ENCODE measurements at regions of chr17 and their contacts with region 1.

Region 1: DNA sequence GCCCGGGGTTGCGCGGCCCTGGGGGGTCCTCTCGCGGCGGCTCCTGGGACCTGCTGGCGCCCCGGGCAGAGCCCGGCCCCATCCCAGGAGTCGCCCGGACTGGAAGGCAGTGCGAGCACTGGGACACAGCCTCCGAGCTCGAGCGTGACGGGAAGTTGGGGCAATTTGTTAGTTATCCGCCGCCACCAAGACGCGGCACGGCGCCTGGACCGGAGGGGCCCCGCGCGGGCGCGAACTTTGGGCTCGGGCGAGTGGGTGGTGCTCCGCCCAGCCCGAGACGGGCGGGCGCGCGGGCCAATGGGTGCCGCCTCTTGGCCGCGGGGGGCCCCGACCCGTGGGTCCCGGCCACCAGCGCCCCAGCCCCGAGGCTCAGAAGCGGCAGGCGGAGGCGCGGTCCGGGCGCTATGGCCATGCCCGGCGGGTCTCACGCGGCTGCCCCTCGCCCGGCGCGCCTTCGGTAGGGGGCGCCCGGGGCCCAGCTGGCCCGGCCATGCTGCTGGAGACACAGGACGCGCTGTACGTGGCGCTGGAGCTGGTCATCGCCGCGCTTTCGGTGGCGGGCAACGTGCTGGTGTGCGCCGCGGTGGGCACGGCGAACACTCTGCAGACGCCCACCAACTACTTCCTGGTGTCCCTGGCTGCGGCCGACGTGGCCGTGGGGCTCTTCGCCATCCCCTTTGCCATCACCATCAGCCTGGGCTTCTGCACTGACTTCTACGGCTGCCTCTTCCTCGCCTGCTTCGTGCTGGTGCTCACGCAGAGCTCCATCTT is at the start of gene ADORA2B:
- DNase-seq: no peak
- ATAC-seq: peak; percentile 81
- H3K4me3 ChIP-seq: peak within 1 kb of the TSS; percentile 56 to 86
- H3K27ac ChIP-seq: peak within 1 kb of the TSS; percentile 92
- H3K4me1 ChIP-seq: peaks cover 17 to 55% of the 10 kb centered on the region in 2 experiments
- H3K27me3 ChIP-seq: no peaks in the 10 kb centered on the region
- CTCF ChIP-seq: peak; percentile 25 to 43 (median 43); a peak in 5 of 6 replicates
- POLR2A ChIP-seq: peak; percentile 20
- RAD21 ChIP-seq: peak; percentile 77
- total RNA-seq, gene ADORA2B: 47.5 TPM

Region 2: GRCh38 chr17:15257258-15257788 is 687.6 kb before region 1 on chr17:
- CTCF ChIA-PET with region 1: no interaction called
- POLR2A ChIA-PET with region 1: no interaction called
- RAD21 ChIA-PET with region 1: no interaction called
- intact Hi-C with region 1: loop called (anchors 5 kb)
- DNase-seq: peak; percentile 59
- ATAC-seq: peak; percentile 68
- H3K4me3 ChIP-seq: no peak overlapping the region
- H3K27ac ChIP-seq: 0 out of 2 replicates have a peak overlapping the region, but pooled peaks have one; percentile 8
- H3K4me1 ChIP-seq: peaks cover 13 to 34% of the 10 kb centered on the region in 2 experiments; a peak in 3 of 4 replicates
- H3K27me3 ChIP-seq: no peaks in the 10 kb centered on the region
- CTCF ChIP-seq: peak; percentile 81 to 92 (median 91)
- POLR2A ChIP-seq: no peak
- RAD21 ChIP-seq: peak; percentile 56

Region 3: DNA sequence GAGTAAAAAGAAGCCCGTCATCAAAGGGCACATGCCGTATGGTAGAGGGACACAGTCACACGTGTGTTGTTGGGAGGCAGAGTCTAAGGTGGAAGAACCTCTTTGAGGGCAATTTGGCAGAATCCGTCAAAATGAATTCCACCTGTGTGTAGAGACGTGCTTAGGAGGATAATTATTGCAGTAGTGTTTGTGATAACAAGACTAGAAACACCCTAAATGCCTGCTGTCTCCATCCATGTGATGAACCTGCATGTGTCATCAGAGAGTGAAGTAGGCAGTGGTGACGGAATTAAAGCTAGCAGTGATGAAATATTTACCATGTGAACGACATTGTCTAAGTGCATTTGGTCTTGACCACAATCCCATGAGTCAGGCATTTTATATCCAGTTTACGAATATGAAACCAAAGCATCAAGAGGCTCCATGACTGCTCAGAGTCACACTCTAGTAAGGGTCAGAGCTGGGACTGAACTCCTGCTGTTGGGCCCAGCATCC is 61.3 kb before region 1 on chr17:
- CTCF ChIA-PET with region 1: no interaction called
- POLR2A ChIA-PET with region 1: no interaction called
- RAD21 ChIA-PET with region 1: no interaction called
- intact Hi-C with region 1: no loop called
- DNase-seq: peak; percentile 2
- ATAC-seq: no peak
- H3K4me3 ChIP-seq: no peak overlapping the region
- H3K27ac ChIP-seq: no peak overlapping the region
- H3K4me1 ChIP-seq: no peaks in the 10 kb centered on the region
- H3K27me3 ChIP-seq: no peaks in the 10 kb centered on the region
- CTCF ChIP-seq: no peak
- POLR2A ChIP-seq: no peak
- RAD21 ChIP-seq: no peak

Region 4: GRCh38 chr17:15957206-15957605 is 12.3 kb after region 1 on chr17:
- CTCF ChIA-PET with region 1: interaction called, 8 read pairs
- POLR2A ChIA-PET with region 1: interaction called, 20 read pairs
- RAD21 ChIA-PET with region 1: interaction called, 3 read pairs
- intact Hi-C with region 1: loop called (anchors 1 kb)
- DNase-seq: peak; percentile 86
- ATAC-seq: peak; percentile 60
- H3K4me3 ChIP-seq: peak overlapping the region in 1 of 2 experiments; percentile 36; a peak in 2 of 4 replicates
- H3K27ac ChIP-seq: peak overlapping the region; percentile 92
- H3K4me1 ChIP-seq: peaks cover 82 to 97% of the 10 kb centered on the region in 2 experiments
- H3K27me3 ChIP-seq: no peaks in the 10 kb centered on the region
- CTCF ChIP-seq: no peak
- POLR2A ChIP-seq: no peak
- RAD21 ChIP-seq: no peak

Region 5: GRCh38 chr17:16108386-16108785 is 163.4 kb after region 1 on chr17:
- CTCF ChIA-PET with region 1: no interaction called
- POLR2A ChIA-PET with region 1: no interaction called
- RAD21 ChIA-PET with region 1: no interaction called
- intact Hi-C with region 1: no loop called
- DNase-seq: no peak
- ATAC-seq: no peak
- H3K4me3 ChIP-seq: no peak overlapping the region
- H3K27ac ChIP-seq: no peak overlapping the region
- H3K4me1 ChIP-seq: no peaks in the 10 kb centered on the region
- H3K27me3 ChIP-seq: no peaks in the 10 kb centered on the region
- CTCF ChIP-seq: no peak
- POLR2A ChIP-seq: no peak
- RAD21 ChIP-seq: no peak

Region 6: GRCh38 chr17:16962818-16963217 is 1017.9 kb after region 1 on chr17:
- CTCF ChIA-PET with region 1: no interaction called
- POLR2A ChIA-PET with region 1: no interaction called
- RAD21 ChIA-PET with region 1: no interaction called
- intact Hi-C with region 1: no loop called
- DNase-seq: peak; percentile 41
- ATAC-seq: peak; percentile 99
- H3K4me3 ChIP-seq: no peak overlapping the region
- H3K27ac ChIP-seq: no peak overlapping the region
- H3K4me1 ChIP-seq: peaks cover 4 to 10% of the 10 kb centered on the region in 2 experiments; a peak in 3 of 4 replicates
- H3K27me3 ChIP-seq: no peaks in the 10 kb centered on the region
- CTCF ChIP-seq: peak; percentile 7 to 55 (median 43); a peak in 5 of 6 replicates
- POLR2A ChIP-seq: no peak
- RAD21 ChIP-seq: peak; percentile 44

Measured in HCT116 (cell line).